PC-9 (cell line): ENCODE measurements at regions of chr12 and their contacts with region 1.

Region 1: GRCh38 chr12:10153271-10154144 is 18.4 kb downstream of the OLR1 start:
- DNase-seq: peak; percentile 48 to 76
- H3K4me3 ChIP-seq: peak overlapping the region; percentile 62
- H3K27ac ChIP-seq: no peak overlapping the region
- H3K4me1 ChIP-seq: no peaks in the 10 kb centered on the region
- H3K27me3 ChIP-seq: no peaks in the 10 kb centered on the region
- CTCF ChIP-seq: peak; percentile 95

Region 2: DNA sequence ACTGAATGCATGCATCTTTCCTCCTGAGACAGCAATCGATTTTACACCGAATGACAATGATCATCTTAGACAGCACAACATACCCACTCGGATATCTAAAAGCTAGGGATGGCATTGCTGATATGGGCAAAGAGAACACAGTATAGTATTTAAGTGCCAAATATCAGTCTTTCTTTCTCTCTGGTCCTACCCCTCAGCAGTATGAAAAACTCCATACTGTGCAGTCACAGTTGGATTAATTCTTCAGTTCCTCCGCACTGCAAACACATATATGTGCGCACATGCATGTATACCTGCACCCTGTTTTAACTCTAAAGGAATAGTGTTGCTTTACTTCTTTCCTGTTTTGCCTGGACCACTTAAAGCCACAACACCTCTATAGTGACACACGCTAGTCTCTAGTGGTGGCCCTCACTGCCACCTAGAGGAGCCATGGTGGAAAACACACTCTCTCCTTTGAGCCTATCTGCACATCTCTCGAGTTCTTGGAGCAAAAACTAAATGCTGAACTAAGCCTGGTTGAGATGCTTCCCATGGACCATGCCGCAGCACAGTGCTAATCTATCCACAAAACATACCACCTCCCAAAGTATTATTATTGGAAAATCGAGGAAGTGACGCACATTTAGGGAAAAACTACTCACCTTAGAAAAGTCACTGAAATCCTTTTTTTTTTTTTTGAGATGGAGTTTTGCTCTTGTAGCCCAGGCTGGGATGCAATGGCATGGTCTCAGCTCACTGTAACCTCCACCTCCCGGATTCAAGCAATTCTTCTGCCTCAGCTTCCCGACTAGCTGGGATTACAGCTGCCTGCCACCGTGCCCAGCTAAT is 37.3 kb after region 1 on chr12:
- CTCF ChIA-PET with region 1: interaction called, 28 read pairs
- POLR2A ChIA-PET with region 1: interaction called, 10 read pairs
- intact Hi-C with region 1: loop called (anchors 1 kb)
- DNase-seq: peak; percentile 59 to 67
- H3K4me3 ChIP-seq: no peak overlapping the region
- H3K27ac ChIP-seq: peak overlapping the region; percentile 79
- H3K4me1 ChIP-seq: peaks cover 40% of the 10 kb centered on the region
- H3K27me3 ChIP-seq: no peaks in the 10 kb centered on the region
- CTCF ChIP-seq: peak; percentile 74

Region 3: GRCh38 chr12:10227648-10228047 is 74.1 kb after region 1 on chr12:
- CTCF ChIA-PET with region 1: interaction called, 12 read pairs
- POLR2A ChIA-PET with region 1: interaction called, 3 read pairs
- intact Hi-C with region 1: no loop called
- DNase-seq: no peak
- H3K4me3 ChIP-seq: no peak overlapping the region
- H3K27ac ChIP-seq: no peak overlapping the region
- H3K4me1 ChIP-seq: no peaks in the 10 kb centered on the region
- H3K27me3 ChIP-seq: no peaks in the 10 kb centered on the region
- CTCF ChIP-seq: no peak

Region 4: DNA sequence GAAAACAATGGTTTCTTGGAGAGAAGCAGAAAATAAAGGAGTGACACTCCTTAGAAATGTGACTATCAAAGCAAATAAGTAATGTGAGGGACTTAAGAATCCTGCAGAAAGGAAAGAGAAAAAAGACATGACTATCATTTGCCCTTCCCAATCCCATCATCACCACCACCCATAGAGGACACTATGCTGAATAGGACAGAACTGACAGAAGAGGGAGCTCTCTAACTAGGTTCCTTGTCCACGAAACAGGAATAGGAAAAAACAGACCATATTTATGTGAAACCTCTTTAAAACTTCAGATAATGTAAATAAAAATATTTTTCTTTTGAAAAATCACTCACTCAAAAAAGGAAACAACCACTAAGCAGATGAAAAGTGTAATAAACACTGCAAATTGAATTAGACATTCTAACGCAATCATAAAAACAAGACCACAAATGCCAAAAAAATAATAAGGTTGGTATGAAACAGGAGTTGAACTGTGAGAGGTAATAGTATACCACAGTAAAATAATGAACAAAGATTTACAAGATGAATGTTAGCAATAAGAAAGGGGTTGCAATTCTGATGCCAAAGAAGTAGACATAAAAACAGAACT is 178.2 kb after region 1 on chr12:
- CTCF ChIA-PET with region 1: no interaction called
- POLR2A ChIA-PET with region 1: no interaction called
- intact Hi-C with region 1: loop called (anchors 1 kb)
- DNase-seq: peak in 1 of 2 experiments; percentile 19
- H3K4me3 ChIP-seq: no peak overlapping the region
- H3K27ac ChIP-seq: no peak overlapping the region
- H3K4me1 ChIP-seq: no peaks in the 10 kb centered on the region
- H3K27me3 ChIP-seq: no peaks in the 10 kb centered on the region
- CTCF ChIP-seq: peak; percentile 79

Region 5: GRCh38 chr12:11486623-11487444 is 1333.3 kb after region 1 on chr12:
- CTCF ChIA-PET with region 1: no interaction called
- POLR2A ChIA-PET with region 1: no interaction called
- intact Hi-C with region 1: loop called (anchors 5 kb)
- DNase-seq: peak; percentile 66 to 71
- H3K4me3 ChIP-seq: no peak overlapping the region
- H3K27ac ChIP-seq: no peak overlapping the region
- H3K4me1 ChIP-seq: peaks cover 12% of the 10 kb centered on the region
- H3K27me3 ChIP-seq: no peaks in the 10 kb centered on the region
- CTCF ChIP-seq: peak; percentile 99